ENCODE measurements at regions of chr2 and their contacts with region 1.

Region 1: GRCh38 chr2:29196792-29197788 is 81.9 kb downstream of the CLIP4 start:
- DNase-seq: peak; percentile 83
- ATAC-seq: peak; percentile 87

Region 2: DNA sequence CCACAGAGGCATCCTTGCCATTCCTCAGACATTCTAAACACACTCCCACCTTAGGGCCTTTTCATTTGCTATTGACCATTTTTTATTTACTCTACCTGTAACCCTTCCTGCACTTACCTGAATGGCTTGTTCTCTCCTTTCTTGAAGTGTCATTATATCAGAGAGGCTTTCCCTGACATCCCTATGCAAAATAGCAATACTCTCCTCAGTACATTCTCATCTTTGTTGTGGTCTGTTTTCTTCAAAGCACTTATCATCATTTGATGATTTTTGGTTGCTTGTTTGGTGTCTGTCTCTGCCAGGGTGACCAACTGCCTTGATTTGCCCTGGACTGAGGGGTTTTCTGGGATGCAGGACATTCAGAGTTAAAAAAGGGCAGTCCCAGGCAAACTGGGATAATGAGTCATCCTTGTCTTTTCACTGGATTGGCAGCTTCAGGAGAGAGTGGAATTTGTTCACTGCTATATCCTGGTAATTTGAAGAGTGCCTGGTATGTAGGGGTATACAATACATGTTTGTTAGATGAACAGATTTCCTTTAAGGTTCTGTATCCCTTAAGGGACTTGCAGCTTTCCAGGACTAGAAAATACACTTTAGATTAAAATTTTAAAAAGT is 1204.2 kb before region 1 on chr2:
- intact Hi-C with region 1: no loop called
- DNase-seq: no peak
- ATAC-seq: no peak

Region 3: GRCh38 chr2:28958689-28959088 is 238.4 kb before region 1 on chr2:
- intact Hi-C with region 1: loop called (anchors 5 kb)
- DNase-seq: peak; percentile 75
- ATAC-seq: peak; percentile 91

Region 4: DNA sequence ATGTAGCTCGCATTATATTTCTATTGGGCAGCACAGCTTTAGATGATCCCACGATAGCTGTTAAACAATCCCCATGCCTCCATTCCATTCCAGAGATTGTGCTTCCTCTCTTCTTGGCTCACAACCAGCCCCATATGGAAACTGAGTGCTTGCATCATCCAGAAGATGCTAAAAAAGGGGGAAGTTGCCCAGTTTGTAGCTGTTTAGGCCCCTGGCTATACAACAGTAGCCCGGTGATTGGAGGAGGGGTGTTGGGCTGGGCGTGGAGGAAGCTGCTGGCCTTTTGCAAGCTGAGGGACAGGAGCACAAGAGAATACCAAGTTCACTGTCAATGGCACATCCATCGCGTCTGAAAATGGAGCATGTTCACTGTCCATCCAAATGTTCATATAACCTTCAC is 364.1 kb after region 1 on chr2:
- intact Hi-C with region 1: no loop called
- DNase-seq: no peak
- ATAC-seq: no peak

Measured in sciatic nerve (tissue), 2 donors.